A673 (cell line): ENCODE measurements at regions of chr3 and their contacts with region 1.

Region 1: DNA sequence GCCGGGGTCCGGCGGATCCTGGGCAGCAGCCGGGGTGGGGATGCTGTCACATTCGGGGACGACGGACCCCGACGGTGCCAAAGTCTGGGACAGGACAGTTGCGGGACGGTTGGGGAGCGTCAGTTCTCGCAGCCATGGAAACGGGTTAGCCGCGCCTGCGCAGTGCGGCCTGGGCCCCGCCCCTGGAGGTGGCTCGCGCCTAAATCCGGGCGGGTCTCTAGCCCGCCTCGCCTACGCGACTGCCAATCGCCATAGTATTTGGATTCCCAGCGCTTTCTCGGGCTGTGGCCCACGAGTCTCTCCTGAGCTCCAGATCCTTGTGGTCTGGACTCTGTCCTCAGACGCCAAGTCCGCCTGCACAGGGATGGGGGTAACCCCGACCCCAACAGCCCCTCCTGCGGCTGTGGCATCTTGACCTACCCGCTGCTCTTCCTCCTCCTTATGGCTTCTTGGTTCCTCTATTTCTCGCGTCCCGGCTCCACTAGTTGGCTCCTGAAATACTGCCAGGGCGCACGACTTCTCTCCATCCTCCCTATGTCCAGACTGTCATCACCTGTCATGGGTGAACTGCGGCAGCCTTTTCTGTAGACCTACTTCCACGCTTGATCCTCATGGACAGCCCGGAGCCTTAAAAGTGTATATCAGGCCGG is at the start of gene ZMYND10:
- DNase-seq: peak; percentile 69
- H3K4me3 ChIP-seq: peak within 1 kb of the TSS; percentile 40
- H3K27ac ChIP-seq: no peak within 1 kb of the TSS
- H3K4me1 ChIP-seq: peaks cover 6% of the 10 kb centered on the region
- H3K27me3 ChIP-seq: no peaks in the 10 kb centered on the region
- CTCF ChIP-seq: no peak
- total RNA-seq, gene ZMYND10: 0.67 and 1.0 TPM in 2 replicates

Region 2: DNA sequence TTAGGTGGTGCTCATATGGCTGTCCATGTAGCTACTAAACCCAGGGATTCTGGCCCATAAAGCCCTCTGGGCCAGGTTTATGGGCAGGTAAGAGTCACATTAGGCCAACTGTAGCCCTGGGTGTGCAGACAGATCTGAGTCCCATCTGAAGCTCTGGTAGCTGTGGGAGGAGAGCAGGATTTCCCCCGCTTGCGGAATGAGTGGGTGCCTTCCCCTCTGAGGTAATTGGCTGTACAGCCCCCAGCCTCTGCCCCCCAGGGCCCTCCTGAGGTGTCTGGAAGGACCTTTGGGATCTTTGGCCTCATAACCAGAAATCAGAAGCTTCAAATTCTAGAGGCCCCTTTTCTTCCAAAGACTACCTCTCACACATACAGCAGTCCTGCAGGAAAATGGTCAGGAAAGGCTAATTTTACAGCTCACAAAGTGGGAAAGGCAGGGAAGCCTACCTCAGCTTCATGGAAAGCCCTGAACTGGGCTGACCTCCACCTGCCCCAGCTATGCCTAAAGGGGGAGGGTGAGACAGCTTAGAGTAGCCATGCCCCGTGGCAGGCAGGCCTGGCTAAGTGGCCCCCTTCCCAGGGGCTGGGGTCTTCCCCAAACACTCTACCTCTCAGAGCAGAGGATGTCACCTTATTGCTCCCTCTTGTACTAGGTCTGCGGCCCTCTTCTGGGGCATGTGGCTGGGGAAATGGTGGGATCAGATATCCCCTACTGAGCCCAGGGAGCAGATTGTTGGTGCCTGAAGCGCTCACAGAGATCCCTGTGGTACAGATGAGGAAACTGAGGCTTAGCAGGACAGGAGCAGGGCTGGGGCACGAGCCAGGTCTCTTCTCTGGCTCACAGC is 240.4 kb after region 1 on chr3:
- CTCF ChIA-PET with region 1: no interaction called
- POLR2A ChIA-PET with region 1: interaction called, 11 read pairs
- intact Hi-C with region 1: no loop called
- DNase-seq: no peak
- H3K4me3 ChIP-seq: no peak overlapping the region
- H3K27ac ChIP-seq: no peak overlapping the region
- H3K4me1 ChIP-seq: no peaks in the 10 kb centered on the region
- H3K27me3 ChIP-seq: no peaks in the 10 kb centered on the region
- CTCF ChIP-seq: no peak

Region 3: GRCh38 chr3:51024765-51025632 is 679.3 kb after region 1 on chr3:
- CTCF ChIA-PET with region 1: no interaction called
- POLR2A ChIA-PET with region 1: no interaction called
- intact Hi-C with region 1: no loop called
- DNase-seq: no peak
- H3K4me3 ChIP-seq: no peak overlapping the region
- H3K27ac ChIP-seq: no peak overlapping the region
- H3K4me1 ChIP-seq: no peaks in the 10 kb centered on the region
- H3K27me3 ChIP-seq: no peaks in the 10 kb centered on the region
- CTCF ChIP-seq: no peak